ENCODE measurements at regions of chr14 and their contacts with region 1.

Region 1: GRCh38 chr14:74362361-74362915 is 14.2 kb downstream of the VRTN start:
- DNase-seq: peak; percentile 82

Region 2: GRCh38 chr14:74478996-74479635 is 116.7 kb after region 1 on chr14:
- intact Hi-C with region 1: loop called (anchors 2 kb)
- DNase-seq: no peak